OCI-LY7 (cell line): ENCODE measurements at regions of chr3 and their contacts with region 1.

Region 1: DNA sequence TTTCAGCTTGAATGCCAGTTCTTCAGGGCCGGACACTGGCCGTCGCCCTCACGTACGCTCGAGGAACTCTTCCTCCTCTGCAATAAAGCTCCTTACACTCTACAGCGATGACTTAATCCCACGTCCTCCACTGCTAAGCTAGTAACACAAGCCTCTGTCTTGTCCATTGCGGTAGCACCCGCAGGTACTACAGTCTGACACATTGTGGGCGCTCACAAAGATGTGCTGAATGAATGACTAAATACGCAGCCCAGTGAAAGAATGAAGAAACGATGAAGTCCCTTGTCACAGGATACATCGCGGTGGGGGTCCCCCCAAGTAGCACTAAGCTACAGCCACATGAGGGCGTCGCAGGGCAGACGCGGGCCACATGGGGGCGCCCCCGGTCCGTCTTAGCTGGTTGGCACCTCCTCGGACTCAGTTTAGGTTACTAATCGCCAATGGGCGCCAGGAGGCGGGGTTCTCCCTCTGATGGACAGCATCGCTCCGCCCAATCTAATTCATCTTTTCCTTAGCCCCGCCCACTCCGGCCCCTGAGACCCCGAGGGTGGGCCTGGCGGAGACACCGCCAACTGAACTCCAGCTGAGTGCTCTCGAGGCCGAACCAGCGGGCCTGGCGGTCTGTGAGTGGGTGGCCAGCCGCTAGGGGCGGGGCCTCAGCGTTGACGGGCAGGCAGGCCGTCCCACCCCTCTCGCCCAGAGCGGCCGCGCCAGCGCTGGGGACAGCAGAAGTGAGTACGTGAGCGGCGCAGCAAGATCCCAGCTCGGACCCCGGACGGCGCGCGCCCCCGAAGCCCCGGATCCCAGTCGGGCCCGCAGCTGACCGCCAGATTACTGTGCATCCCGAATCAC is at the start of gene EPHB3:
- DNase-seq: peak; percentile 94
- H3K4me3 ChIP-seq: peak within 1 kb of the TSS; percentile 11
- H3K27ac ChIP-seq: no peak within 1 kb of the TSS
- H3K4me1 ChIP-seq: no peaks in the 10 kb centered on the region
- CTCF ChIP-seq: peak; percentile 99
- total RNA-seq, gene EPHB3: not detected in 2 replicates

Region 2: GRCh38 chr3:184727357-184728009 is 166.2 kb after region 1 on chr3:
- CTCF ChIA-PET with region 1: no interaction called
- POLR2A ChIA-PET with region 1: interaction called, 3 read pairs
- intact Hi-C with region 1: loop called (anchors 1 kb)
- DNase-seq: peak; percentile 62
- H3K4me3 ChIP-seq: no peak overlapping the region
- H3K27ac ChIP-seq: no peak overlapping the region
- H3K4me1 ChIP-seq: no peaks in the 10 kb centered on the region
- CTCF ChIP-seq: peak; percentile 84

Region 3: GRCh38 chr3:184748219-184749135 is 187.2 kb after region 1 on chr3:
- CTCF ChIA-PET with region 1: no interaction called
- POLR2A ChIA-PET with region 1: no interaction called
- intact Hi-C with region 1: loop called (anchors 1 kb)
- DNase-seq: peak; percentile 35
- H3K4me3 ChIP-seq: no peak overlapping the region
- H3K27ac ChIP-seq: no peak overlapping the region
- H3K4me1 ChIP-seq: no peaks in the 10 kb centered on the region
- CTCF ChIP-seq: peak; percentile 69

Region 4: GRCh38 chr3:184777336-184778004 is 216.2 kb after region 1 on chr3:
- CTCF ChIA-PET with region 1: interaction called, 16 read pairs
- POLR2A ChIA-PET with region 1: no interaction called
- intact Hi-C with region 1: loop called (anchors 1 kb)
- DNase-seq: peak; percentile 89
- H3K4me3 ChIP-seq: no peak overlapping the region
- H3K27ac ChIP-seq: no peak overlapping the region
- H3K4me1 ChIP-seq: no peaks in the 10 kb centered on the region
- CTCF ChIP-seq: peak; percentile 91